Ascending aorta (tissue), 2 donors: ENCODE measurements at regions of chr4 and their contacts with region 1.

Region 1: DNA sequence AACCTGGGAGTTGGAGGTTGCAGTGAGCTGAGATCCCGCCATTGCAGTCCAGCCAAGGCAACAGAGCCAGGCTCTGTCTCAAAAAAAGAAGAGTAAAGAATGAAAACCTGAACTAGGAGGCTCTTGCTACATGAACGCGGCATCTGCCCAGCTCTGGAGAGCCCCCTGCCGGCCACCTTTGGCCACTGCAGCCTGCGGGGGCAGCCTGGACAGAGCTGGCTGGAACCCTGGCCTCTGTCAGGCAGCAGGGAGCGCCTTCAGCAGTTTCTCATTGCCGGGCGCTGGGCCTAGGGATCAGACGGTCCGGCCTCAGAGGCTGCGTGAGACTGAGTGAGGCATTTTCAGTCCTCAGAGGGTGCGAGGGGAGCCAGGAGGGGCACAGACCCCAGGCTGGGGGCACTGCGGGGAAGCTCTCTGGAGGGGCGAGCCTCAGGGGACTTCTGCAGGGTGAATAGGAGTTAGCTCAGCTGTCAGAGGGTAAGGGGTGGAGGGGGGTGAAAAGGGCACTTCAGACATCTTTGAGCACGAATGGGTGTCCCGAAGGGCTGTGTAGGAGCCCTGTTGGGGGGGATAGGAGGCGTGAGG is 17.5 kb downstream of the DOK7 start:
- DNase-seq: peak in 1 of 2 donors; percentile 91
- H3K4me3 ChIP-seq: no peak overlapping the region
- H3K27ac ChIP-seq: peak overlapping the region; percentile 95 to 96
- H3K4me1 ChIP-seq: peaks cover 6 to 24% of the 10 kb centered on the region in 2 donors
- H3K27me3 ChIP-seq: no peaks in the 10 kb centered on the region
- CTCF ChIP-seq: peak; percentile 93 to 100 (median 100)

Region 2: GRCh38 chr4:2511645-2512131 is 968.9 kb before region 1 on chr4:
- intact Hi-C with region 1: no loop called
- DNase-seq: no peak
- H3K4me3 ChIP-seq: no peak overlapping the region
- H3K27ac ChIP-seq: no peak overlapping the region
- H3K4me1 ChIP-seq: peaks cover 0 to 6% of the 10 kb centered on the region in 2 donors
- H3K27me3 ChIP-seq: no peaks in the 10 kb centered on the region
- CTCF ChIP-seq: no peak

Region 3: GRCh38 chr4:3201718-3202702 is 278.6 kb before region 1 on chr4:
- intact Hi-C with region 1: loop called (anchors 5 kb)
- DNase-seq: no peak
- H3K4me3 ChIP-seq: no peak overlapping the region
- H3K27ac ChIP-seq: no peak overlapping the region
- H3K4me1 ChIP-seq: peaks cover 0 to 3% of the 10 kb centered on the region in 2 donors
- H3K27me3 ChIP-seq: no peaks in the 10 kb centered on the region
- CTCF ChIP-seq: no peak

Region 4: GRCh38 chr4:3346146-3346545 is 134.5 kb before region 1 on chr4:
- intact Hi-C with region 1: loop called (anchors 1 kb)
- DNase-seq: no peak
- H3K4me3 ChIP-seq: no peak overlapping the region
- H3K27ac ChIP-seq: no peak overlapping the region
- H3K4me1 ChIP-seq: no peaks in the 10 kb centered on the region
- H3K27me3 ChIP-seq: no peaks in the 10 kb centered on the region
- CTCF ChIP-seq: peak; percentile 82 to 87 (median 86)

Region 5: DNA sequence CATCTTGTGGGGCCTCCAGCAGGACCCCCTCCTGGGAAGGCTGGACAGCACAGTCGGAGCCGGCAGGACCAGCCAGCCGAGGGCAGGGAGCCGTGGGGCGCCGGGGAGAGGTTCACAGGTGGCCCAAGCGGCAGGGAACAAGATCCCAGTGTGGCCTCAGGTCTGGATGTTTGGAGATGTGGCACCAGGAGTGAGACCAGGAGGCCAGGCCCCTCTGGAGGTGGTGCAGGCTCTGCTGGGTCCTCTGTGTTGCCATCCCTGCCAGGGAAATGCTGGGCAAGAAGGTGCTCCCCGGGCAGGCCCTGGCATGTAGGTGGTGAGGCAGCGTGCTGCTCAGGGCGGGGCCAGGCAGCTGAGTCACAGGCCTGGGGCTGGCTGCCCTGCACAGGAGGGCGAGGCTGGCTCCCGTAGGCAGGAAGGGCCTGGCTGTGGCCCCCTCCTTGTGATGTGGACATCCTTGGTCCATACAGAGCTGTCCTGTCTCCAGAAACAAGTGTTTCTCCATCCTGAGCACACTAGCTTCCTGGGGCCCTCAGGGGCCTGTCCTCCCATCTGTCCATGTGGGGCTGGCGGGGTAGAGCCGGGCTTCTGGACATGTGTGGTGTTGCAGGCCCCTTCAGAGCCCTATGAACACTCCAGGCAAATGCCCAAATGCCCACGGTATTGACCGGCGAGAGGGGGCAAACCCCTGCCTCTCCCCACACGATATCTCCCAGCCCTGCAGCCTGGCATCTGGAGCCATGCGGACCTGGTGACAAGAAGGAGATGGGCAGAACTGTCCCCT is 43.6 kb before region 1 on chr4:
- intact Hi-C with region 1: loop called (anchors 2 kb)
- DNase-seq: peak in 1 of 2 donors; percentile 78
- H3K4me3 ChIP-seq: no peak overlapping the region
- H3K27ac ChIP-seq: peak overlapping the region in 1 of 2 donors; percentile 3
- H3K4me1 ChIP-seq: peaks cover 0 to 7% of the 10 kb centered on the region in 2 donors
- H3K27me3 ChIP-seq: no peaks in the 10 kb centered on the region
- CTCF ChIP-seq: no peak

Region 6: GRCh38 chr4:3531879-3532713 is 51.5 kb after region 1 on chr4 and contains the start of gene LRPAP1:
- intact Hi-C with region 1: loop called (anchors 1 kb)
- DNase-seq: peak; percentile 65 to 95
- H3K4me3 ChIP-seq: peak within 1 kb of the TSS; percentile 96 to 99
- H3K27ac ChIP-seq: peak within 1 kb of the TSS; percentile 72 to 76
- H3K4me1 ChIP-seq: peaks cover 3 to 20% of the 10 kb centered on the region in 2 donors
- H3K27me3 ChIP-seq: no peaks in the 10 kb centered on the region
- CTCF ChIP-seq: no peak
- total RNA-seq, gene LRPAP1: 172 TPM

Region 7: GRCh38 chr4:3765271-3766040 is 284.8 kb after region 1 on chr4:
- intact Hi-C with region 1: loop called (anchors 2 kb)
- DNase-seq: peak in 1 of 2 donors; percentile 89
- H3K4me3 ChIP-seq: peak overlapping the region; percentile 49 to 78
- H3K27ac ChIP-seq: peak overlapping the region; percentile 89 to 90
- H3K4me1 ChIP-seq: peaks cover 0 to 29% of the 10 kb centered on the region in 2 donors
- H3K27me3 ChIP-seq: no peaks in the 10 kb centered on the region
- CTCF ChIP-seq: peak in 2 of 3 experiments; percentile 28 to 30